ENCODE measurements at regions of chr19 and their contacts with region 1.

Region 1: GRCh38 chr19:12551060-12551832 is at the start of gene ZNF564:
- DNase-seq: peak; percentile 96 to 98
- H3K4me3 ChIP-seq: peak within 1 kb of the TSS; percentile 83
- H3K4me3 Mint-ChIP-seq: peak within 1 kb of the TSS; percentile 83
- H3K27ac Mint-ChIP-seq: peak within 1 kb of the TSS; percentile 90
- H3K4me1 ChIP-seq: peaks cover 5% of the 10 kb centered on the region; the same call in 1 of the 2 replicates
- H3K4me1 Mint-ChIP-seq: peaks cover 10% of the 10 kb centered on the region
- H3K27me3 ChIP-seq: no peaks in the 10 kb centered on the region
- H3K27me3 Mint-ChIP-seq: no peaks in the 10 kb centered on the region
- CTCF ChIP-seq: no peak
- total RNA-seq, gene ZNF564: 11.1 and 11.6 TPM in 2 replicates

Region 2: DNA sequence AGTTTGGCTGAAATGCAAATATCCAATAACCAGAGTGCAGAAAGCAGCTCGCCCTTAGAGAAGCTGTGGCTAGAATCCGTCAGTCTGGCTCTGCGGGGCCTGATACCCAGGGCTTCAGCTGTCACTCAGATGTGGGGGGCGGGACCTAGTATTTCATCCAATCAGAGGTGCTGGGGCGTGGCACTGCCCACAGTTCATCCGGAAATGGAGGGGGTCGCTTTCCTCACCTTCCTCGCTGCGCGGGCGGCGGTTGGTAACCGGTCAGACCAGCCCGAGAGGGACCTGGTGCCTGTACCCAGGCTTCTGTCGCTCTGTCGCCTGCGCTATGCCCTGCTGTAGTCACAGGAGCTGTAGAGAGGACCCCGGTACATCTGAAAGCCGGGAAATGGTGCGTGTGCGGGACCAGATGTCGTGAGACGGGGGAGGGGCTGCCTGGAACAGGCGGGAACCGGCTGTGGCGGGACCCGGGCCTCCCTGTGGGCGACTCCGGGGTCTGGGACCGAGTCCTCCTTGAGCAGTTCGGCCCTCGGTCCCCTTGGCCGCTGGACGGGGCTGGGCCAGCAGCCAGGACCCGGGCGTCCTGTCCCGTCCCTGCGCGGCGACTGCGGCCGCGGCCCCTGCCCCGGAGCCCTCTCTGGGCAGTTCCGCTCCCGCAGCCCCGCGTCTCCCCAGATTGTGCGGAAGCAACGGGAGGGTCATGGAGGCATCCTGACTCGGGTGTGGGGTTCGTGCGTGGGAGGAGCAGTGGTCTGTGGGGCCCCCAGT is 626.2 kb before region 1 on chr19 and contains the start of gene ZNF700:
- CTCF ChIA-PET with region 1: no interaction called
- POLR2A ChIA-PET with region 1: no interaction called
- intact Hi-C with region 1: loop called (anchors 5 kb)
- DNase-seq: peak; percentile 95 to 97
- H3K4me3 ChIP-seq: peak within 1 kb of the TSS; percentile 84
- H3K4me3 Mint-ChIP-seq: peak within 1 kb of the TSS; percentile 72
- H3K27ac Mint-ChIP-seq: peak within 1 kb of the TSS; percentile 97
- H3K4me1 ChIP-seq: peaks cover 12% of the 10 kb centered on the region
- H3K4me1 Mint-ChIP-seq: peaks cover 15% of the 10 kb centered on the region
- H3K27me3 ChIP-seq: no peaks in the 10 kb centered on the region
- H3K27me3 Mint-ChIP-seq: no peaks in the 10 kb centered on the region
- CTCF ChIP-seq: no peak
- total RNA-seq, gene ZNF700: 8.5 and 9.7 TPM in 2 replicates

Region 3: GRCh38 chr19:12440541-12441316 is 110.5 kb before region 1 on chr19 and contains the start of gene ZNF443:
- CTCF ChIA-PET with region 1: no interaction called
- POLR2A ChIA-PET with region 1: no interaction called
- intact Hi-C with region 1: loop called (anchors 5 kb)
- DNase-seq: peak; percentile 99
- H3K4me3 ChIP-seq: peak within 1 kb of the TSS; percentile 80
- H3K4me3 Mint-ChIP-seq: peak within 1 kb of the TSS; percentile 99
- H3K27ac Mint-ChIP-seq: peak within 1 kb of the TSS; percentile 97
- H3K4me1 ChIP-seq: no peaks in the 10 kb centered on the region
- H3K4me1 Mint-ChIP-seq: no peaks in the 10 kb centered on the region
- H3K27me3 ChIP-seq: no peaks in the 10 kb centered on the region
- H3K27me3 Mint-ChIP-seq: no peaks in the 10 kb centered on the region
- CTCF ChIP-seq: no peak
- total RNA-seq, gene ZNF443: 5.1 and 6.1 TPM in 2 replicates

Region 4: DNA sequence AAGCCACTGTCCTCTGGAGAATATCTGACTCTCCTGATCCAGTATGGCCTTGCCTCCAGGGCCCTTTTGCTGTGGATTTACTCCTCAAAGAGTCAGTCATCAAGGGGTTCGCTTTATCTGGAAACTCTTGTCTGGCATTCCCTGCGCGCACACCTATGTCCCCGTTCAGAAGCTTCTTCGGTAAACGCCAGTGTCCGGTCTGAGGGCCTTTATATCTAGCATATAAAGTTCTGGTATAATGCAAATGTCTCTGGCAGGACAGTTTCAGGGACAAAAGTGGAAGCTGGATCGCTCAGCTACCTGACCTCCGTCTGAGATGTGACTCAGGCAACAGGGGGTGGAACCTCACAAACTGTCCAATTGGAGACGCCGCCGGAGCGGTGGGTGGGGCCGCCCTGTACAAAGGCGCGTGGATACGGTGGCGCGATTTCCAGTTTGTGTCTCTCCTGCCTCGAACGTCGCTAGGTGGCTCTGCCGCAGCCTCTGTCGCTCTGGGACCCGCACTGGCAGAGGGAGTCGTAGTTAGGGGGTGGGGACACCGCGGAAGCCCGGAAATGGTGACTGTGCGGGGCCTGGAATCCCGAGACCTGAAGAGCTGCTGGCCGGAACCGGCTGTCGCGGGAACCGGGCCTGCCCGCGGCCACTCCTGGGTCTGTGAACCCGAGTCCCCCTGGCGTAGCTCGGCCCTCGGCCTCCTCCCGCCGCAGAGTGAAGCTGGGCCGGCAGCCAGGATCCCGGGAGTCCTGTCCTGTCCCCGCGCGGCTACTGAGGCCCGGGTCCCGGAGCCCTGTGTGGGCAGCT is 56.0 kb before region 1 on chr19:
- CTCF ChIA-PET with region 1: no interaction called
- POLR2A ChIA-PET with region 1: interaction called, 14 read pairs
- intact Hi-C with region 1: loop called (anchors 1 kb)
- DNase-seq: peak; percentile 96
- H3K4me3 ChIP-seq: peak overlapping the region; percentile 70
- H3K4me3 Mint-ChIP-seq: peak overlapping the region; percentile 84
- H3K27ac Mint-ChIP-seq: peak overlapping the region; percentile 95
- H3K4me1 ChIP-seq: no peaks in the 10 kb centered on the region
- H3K4me1 Mint-ChIP-seq: no peaks in the 10 kb centered on the region
- H3K27me3 ChIP-seq: no peaks in the 10 kb centered on the region; the same call in 1 of the 2 replicates
- H3K27me3 Mint-ChIP-seq: no peaks in the 10 kb centered on the region
- CTCF ChIP-seq: peak; percentile 23 to 69

Region 5: DNA sequence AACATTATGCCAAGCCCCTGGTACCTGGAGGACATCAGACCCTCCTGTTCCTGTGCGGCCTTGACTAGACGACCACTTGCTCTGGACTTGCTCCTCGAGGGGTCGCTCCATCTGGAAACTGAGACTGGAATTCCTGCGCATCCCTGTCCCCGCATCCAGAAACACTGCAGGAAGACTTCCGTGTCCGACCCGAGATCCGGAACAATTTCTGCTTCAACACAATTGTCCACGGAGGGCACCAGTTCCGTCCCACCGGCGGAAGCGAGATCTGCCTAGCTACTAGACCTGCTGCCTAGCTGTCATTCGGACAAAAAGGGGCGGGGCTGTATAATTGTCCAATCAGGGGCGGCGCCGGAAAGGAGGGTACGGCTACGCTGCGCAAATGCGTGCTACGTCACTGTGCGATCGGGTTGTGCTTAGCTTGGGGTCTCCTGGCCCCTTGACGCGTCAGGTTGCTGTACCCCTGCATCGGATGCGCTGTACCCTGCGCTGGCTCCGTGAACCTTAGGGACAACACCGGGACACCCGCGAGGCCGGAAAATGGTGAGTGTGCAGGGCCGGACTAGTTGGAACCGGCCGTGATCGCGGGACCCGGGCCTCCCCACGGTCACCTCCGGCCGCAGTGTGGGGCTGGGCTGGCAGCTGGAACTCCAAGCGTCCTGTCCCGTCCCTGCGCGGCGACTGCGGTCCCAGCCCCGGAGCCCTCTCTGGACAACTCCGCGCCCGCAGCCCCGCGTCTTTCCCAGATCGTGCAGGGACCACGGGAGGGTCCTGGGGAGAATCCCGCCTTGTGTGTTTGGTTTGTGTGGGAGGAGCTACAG is 59.5 kb after region 1 on chr19 and contains the starts of genes ZNF490 and ZNF791:
- CTCF ChIA-PET with region 1: no interaction called
- POLR2A ChIA-PET with region 1: interaction called, 5 read pairs
- intact Hi-C with region 1: loop called (anchors 5 kb)
- DNase-seq: peak; percentile 96 to 97
- H3K4me3 ChIP-seq: peak within 1 kb of the TSS; percentile 94
- H3K4me3 Mint-ChIP-seq: peak within 1 kb of the TSS; percentile 96
- H3K27ac Mint-ChIP-seq: peak within 1 kb of the TSS; percentile 98
- H3K4me1 ChIP-seq: no peaks in the 10 kb centered on the region
- H3K4me1 Mint-ChIP-seq: no peaks in the 10 kb centered on the region
- H3K27me3 ChIP-seq: no peaks in the 10 kb centered on the region
- H3K27me3 Mint-ChIP-seq: no peaks in the 10 kb centered on the region
- CTCF ChIP-seq: no peak
- total RNA-seq, gene ZNF490: 6.1 and 6.3 TPM in 2 replicates
- total RNA-seq, gene ZNF791: 15.2 and 18.9 TPM in 2 replicates